ENCODE measurements at regions of chr17 and their contacts with region 1.

Region 1: GRCh38 chr17:12667299-12667958 is 1.7 kb downstream of the MYOCD start:
- H3K4me3 ChIP-seq: no peak overlapping the region
- H3K27ac ChIP-seq: no peak overlapping the region
- H3K4me1 ChIP-seq: 0 out of 2 replicates have a peak, but pooled peaks cover 5% of the 10 kb centered on the region
- CTCF ChIP-seq: peak; percentile 51; the same call in 1 of the 2 replicates

Region 2: GRCh38 chr17:12247761-12248160 is 419.7 kb before region 1 on chr17:
- CTCF ChIA-PET with region 1: interaction called, 133 read pairs
- POLR2A ChIA-PET with region 1: no interaction called
- H3K4me3 ChIP-seq: no peak overlapping the region
- H3K27ac ChIP-seq: no peak overlapping the region
- H3K4me1 ChIP-seq: no peaks in the 10 kb centered on the region
- CTCF ChIP-seq: no peak

Region 3: DNA sequence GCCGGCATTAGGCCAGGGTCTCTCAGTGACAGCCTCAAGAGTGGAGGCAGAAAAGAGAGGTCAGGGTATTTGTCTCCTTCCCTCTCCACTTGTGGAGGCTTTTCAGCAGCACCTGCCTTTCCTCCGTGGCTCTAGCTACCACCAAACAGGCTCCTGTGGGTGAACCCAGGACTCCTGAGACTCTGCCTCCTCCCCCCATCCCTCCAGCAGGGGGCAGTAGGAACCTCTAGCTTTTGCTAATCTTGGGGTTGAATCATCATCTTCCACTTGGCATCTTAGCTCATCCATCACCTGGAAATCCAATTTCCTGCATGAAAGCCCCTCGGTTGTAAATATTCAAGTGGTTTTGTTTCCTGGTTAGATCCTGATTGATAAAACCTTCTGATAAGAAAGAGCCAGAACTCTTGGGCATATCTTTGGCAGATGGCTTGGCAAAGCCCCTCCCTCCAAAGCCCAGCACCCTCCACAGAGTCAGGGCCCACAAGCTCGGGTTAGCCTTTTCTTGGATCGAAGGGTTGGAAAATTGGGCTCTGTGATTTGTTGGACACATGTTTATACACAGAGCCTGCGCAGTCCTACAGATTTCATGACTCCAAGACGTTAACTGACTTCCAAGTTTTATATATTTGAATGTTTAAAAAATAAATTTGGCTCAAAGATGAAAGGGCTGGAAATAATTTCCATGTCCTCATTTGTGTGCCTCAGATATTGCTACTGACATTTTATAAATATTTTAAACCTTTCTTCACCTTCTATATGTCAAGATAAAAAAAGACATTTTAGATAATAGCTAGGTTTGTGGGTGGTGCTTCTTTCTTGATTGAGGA is 324.6 kb before region 1 on chr17:
- CTCF ChIA-PET with region 1: interaction called, 40 read pairs
- POLR2A ChIA-PET with region 1: no interaction called
- H3K4me3 ChIP-seq: no peak overlapping the region
- H3K27ac ChIP-seq: no peak overlapping the region
- H3K4me1 ChIP-seq: no peaks in the 10 kb centered on the region
- CTCF ChIP-seq: no peak

Region 4: GRCh38 chr17:12545877-12546513 is 121.4 kb before region 1 on chr17:
- CTCF ChIA-PET with region 1: interaction called, 98 read pairs
- POLR2A ChIA-PET with region 1: interaction called, 6 read pairs
- H3K4me3 ChIP-seq: no peak overlapping the region
- H3K27ac ChIP-seq: no peak overlapping the region
- H3K4me1 ChIP-seq: no peaks in the 10 kb centered on the region
- CTCF ChIP-seq: peak; percentile 35; the same call in 1 of the 2 replicates

Region 5: GRCh38 chr17:12644623-12645022 is 22.8 kb before region 1 on chr17:
- CTCF ChIA-PET with region 1: no interaction called
- POLR2A ChIA-PET with region 1: no interaction called
- H3K4me3 ChIP-seq: no peak overlapping the region
- H3K27ac ChIP-seq: no peak overlapping the region
- H3K4me1 ChIP-seq: no peaks in the 10 kb centered on the region
- CTCF ChIP-seq: no peak

Region 6: DNA sequence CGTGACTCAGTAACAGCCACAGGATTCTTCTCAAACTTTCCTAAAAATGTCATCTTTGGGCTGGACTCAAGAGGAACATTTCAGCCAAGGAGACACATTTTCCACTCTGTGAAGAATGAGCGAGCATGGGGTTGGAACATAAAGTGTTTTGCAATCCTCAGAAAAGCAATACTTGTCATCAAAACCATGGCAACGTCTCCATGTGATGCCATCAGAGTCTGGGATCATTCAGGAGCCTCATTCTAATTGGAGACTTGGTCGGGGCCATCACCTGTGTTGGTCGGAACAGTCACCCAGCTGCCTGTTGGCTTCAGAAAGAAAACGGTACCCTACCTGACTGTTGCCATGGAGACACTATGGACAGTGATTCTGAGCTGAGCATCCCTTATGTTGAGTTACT is 23.8 kb after region 1 on chr17:
- CTCF ChIA-PET with region 1: interaction called, 11 read pairs
- POLR2A ChIA-PET with region 1: interaction called, 3 read pairs
- H3K4me3 ChIP-seq: no peak overlapping the region
- H3K27ac ChIP-seq: no peak overlapping the region
- H3K4me1 ChIP-seq: no peaks in the 10 kb centered on the region
- CTCF ChIP-seq: no peak

Region 7: GRCh38 chr17:12789075-12789776 is 121.8 kb after region 1 on chr17 and contains the start of gene ARHGAP44:
- CTCF ChIA-PET with region 1: no interaction called
- POLR2A ChIA-PET with region 1: no interaction called
- H3K4me3 ChIP-seq: peak within 1 kb of the TSS; percentile 86
- H3K27ac ChIP-seq: peak within 1 kb of the TSS; percentile 71; the same call in 1 of the 2 replicates
- H3K4me1 ChIP-seq: peaks cover 7% of the 10 kb centered on the region; the same call in 1 of the 2 replicates
- CTCF ChIP-seq: no peak

Region 8: DNA sequence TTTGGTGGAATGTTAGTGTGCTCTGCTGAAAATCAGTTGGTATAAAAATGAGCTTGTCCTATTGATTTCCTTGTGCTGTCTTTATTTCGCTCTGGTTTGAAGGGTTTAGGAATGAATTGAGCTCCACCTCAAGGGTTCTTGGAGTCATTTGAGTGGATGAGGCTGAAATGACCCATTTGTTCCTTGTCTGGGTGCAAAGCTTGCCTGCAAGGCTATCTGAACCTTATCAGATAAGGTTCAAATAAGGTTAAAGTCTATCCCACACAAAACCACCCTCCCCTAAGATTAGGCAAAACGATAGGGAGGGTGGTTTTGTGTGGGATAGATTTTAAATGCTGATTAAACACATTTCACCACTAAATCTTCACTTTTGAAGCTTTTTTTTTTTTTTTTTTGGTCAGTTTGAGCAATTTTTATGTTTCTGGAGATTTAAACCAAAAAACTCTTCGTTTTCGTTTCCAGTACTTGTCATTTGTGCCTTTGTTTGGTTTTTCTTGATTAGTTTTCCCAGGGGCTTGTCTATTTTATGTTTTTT is 184.5 kb after region 1 on chr17:
- CTCF ChIA-PET with region 1: no interaction called
- POLR2A ChIA-PET with region 1: no interaction called
- H3K4me3 ChIP-seq: no peak overlapping the region
- H3K27ac ChIP-seq: no peak overlapping the region
- H3K4me1 ChIP-seq: no peaks in the 10 kb centered on the region
- CTCF ChIP-seq: no peak